ENCODE measurements at regions of chr5 and their contacts with region 1.

Region 1: DNA sequence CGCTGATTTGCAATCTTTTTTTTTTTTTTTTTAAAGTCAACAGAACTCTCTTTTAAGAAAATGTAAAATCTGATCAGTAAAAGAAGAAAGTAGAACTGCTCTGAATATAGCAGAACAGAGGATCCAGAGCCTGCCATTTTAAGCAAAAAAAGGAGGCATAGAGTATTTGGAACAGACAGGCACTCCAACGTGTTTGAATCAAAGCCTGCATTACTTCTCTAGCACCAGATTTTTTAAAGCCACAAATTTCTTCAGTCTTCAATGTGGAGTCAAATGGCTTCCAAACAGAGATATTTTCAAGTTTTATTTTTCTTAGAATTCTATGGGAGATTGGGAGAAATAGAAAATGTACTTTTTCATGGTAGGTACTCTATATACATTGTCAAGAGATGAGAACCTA is 5.1 kb downstream of the PAIP1 start:
- DNase-seq: no peak
- H3K4me3 Mint-ChIP-seq: no peak overlapping the region
- H3K27ac Mint-ChIP-seq: no peak overlapping the region
- H3K4me1 Mint-ChIP-seq: peaks cover 11% of the 10 kb centered on the region
- H3K27me3 Mint-ChIP-seq: no peaks in the 10 kb centered on the region

Region 2: DNA sequence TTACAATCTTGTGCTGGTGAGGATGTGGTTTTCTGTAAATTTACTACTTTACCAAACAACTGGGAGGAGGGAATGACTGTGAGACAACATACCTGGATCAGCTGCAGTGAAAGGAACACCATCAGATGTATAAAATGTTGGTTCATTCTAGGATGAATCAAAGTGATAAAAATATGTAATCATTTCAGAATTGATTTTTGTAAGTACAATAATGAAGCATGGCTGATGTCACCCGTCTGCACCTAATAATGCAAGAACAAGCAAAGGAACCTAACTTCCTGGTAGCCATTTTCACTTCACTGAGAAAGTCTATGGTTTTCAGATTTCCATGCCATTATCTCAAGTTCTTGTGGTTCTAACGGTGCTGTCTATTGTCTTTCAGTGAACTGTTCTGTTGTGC is 18.1 kb before region 1 on chr5:
- CTCF ChIA-PET with region 1: interaction called, 15 read pairs
- POLR2A ChIA-PET with region 1: no interaction called
- intact Hi-C with region 1: loop called (anchors 1 kb)
- DNase-seq: peak; percentile 29
- H3K4me3 Mint-ChIP-seq: no peak overlapping the region
- H3K27ac Mint-ChIP-seq: peak overlapping the region; percentile 79
- H3K4me1 Mint-ChIP-seq: peaks cover 12% of the 10 kb centered on the region
- H3K27me3 Mint-ChIP-seq: no peaks in the 10 kb centered on the region

Measured in activated CD4-positive, alpha-beta memory T cell treated with anti-CD3 and anti-CD28 coated beads for 36 hours (primary cell).